Right cardiac atrium (tissue), 5 donors: ENCODE measurements at regions of chr10 and their contacts with region 1.

Region 1: DNA sequence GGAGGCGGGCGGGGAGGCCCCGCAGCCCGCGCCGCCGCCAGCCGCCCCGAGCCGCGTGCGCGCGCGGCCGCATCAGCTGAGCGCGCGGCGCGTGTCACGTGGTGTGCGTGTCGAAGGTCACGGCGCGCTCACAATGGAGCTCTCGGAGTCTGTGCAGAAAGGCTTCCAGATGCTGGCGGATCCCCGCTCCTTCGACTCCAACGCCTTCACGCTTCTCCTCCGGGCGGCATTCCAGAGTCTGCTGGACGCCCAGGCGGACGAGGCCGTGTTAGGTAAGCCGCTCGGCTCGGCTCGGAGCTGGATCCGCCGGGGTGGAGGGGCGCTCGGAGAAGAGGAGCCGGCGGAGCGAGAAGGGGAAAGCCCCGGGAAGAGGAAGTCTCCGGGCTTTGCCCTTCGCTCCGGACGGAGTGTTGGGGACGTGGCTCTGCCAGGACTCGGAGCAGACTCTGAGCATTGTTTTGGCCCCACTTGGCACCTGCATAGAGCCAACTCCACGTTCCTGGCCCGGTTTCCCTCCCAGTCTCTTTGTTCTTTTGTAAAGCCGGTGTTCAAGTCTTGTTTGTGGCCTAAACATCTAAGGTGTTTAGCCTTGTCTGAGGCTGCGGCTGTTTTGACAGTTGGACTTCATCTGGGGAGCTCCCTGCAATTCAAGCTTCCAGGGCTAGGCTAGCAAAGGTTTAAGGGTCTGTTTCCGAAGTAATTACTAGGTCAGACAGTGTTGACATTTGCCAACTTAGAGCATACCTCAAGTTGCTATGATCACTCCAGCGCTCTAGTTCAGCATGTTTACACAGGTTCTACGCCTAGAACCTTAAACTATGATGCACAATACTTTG is at the start of gene COMMD3:
- DNase-seq: peak; percentile 90 to 97 (median 95)
- ATAC-seq: peak; percentile 93
- H3K4me3 ChIP-seq: peak within 1 kb of the TSS; percentile 89
- H3K27ac ChIP-seq: peak within 1 kb of the TSS; percentile 96
- H3K4me1 ChIP-seq: peaks cover 3% of the 10 kb centered on the region
- H3K27me3 ChIP-seq: no peaks in the 10 kb centered on the region
- total RNA-seq, gene COMMD3: 67.7 to 86.3 (median 81.2) TPM

Region 2: GRCh38 chr10:21675157-21675796 is 641.2 kb before region 1 on chr10:
- intact Hi-C with region 1: no loop called
- DNase-seq: peak in 1 of 3 donors; percentile 53
- ATAC-seq: peak in 1 of 2 donors; percentile 45
- H3K4me3 ChIP-seq: no peak overlapping the region
- H3K27ac ChIP-seq: no peak overlapping the region
- H3K4me1 ChIP-seq: peaks cover 1% of the 10 kb centered on the region
- H3K27me3 ChIP-seq: no peaks in the 10 kb centered on the region

Region 3: GRCh38 chr10:22228943-22229801 is 87.3 kb before region 1 on chr10:
- intact Hi-C with region 1: loop called in 3 of 4 experiments (anchors 5 to 10 kb)
- DNase-seq: peak; percentile 86 to 94 (median 93)
- ATAC-seq: peak; percentile 99
- H3K4me3 ChIP-seq: peak overlapping the region; percentile 90
- H3K27ac ChIP-seq: peak overlapping the region; percentile 97
- H3K4me1 ChIP-seq: peaks cover 2% of the 10 kb centered on the region
- H3K27me3 ChIP-seq: no peaks in the 10 kb centered on the region

Region 4: GRCh38 chr10:22251751-22252223 is 64.7 kb before region 1 on chr10:
- intact Hi-C with region 1: loop called in 3 of 4 experiments (anchors 5 to 10 kb)
- DNase-seq: peak; percentile 73 to 85 (median 84)
- ATAC-seq: peak; percentile 48 to 71
- H3K4me3 ChIP-seq: peak overlapping the region; percentile 87
- H3K27ac ChIP-seq: peak overlapping the region; percentile 98
- H3K4me1 ChIP-seq: no peaks in the 10 kb centered on the region
- H3K27me3 ChIP-seq: no peaks in the 10 kb centered on the region

Region 5: GRCh38 chr10:22386503-22386902 is 70.0 kb after region 1 on chr10:
- intact Hi-C with region 1: no loop called
- DNase-seq: no peak
- ATAC-seq: no peak
- H3K4me3 ChIP-seq: no peak overlapping the region
- H3K27ac ChIP-seq: no peak overlapping the region
- H3K4me1 ChIP-seq: no peaks in the 10 kb centered on the region
- H3K27me3 ChIP-seq: peaks cover 2% of the 10 kb centered on the region

Region 6: DNA sequence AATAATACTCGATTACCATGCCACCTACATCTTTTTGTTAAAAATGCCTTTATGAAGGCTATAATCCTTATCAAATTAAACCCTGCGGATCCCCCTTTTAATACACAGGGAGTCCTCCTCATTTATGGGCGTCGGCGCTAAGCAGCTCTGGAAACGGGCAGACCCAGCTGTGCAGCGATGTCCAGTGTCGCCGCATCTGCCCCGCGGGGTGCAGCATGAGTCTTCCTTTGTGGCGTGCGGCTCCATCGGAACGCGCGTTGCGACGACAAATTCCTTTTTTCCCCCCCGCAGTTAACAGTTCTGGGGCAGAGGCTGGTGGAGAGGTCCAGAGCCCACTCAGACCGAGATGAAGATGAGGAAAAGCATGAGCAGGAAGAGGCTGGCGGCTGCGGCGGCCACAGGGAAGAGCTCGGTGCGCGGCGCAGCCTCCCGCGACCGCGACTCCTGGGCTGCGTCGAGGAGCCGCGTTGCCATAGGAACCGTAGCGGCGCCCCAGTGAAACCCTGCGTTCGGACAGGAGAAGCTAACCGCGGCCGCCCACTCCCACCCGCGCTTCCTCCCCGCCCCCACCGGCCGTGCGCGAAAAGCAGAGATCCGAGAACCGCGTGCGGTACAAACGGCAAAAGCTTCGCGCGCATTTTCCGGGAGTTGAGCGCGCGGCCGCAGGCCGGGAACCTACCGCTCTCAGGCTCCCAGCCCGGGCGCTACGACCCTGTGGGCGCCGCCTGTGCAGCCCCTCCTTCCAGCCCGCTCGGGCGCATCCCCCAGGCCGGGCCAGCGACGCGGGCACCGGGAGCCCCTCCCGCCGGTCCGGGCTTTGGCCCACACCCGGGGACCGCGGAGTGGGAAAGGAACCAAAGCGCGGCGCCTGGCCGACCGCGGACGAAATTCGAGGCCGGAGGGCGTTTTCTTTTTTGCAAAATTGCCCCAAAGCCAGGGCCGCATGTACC is 159.4 kb after region 1 on chr10:
- intact Hi-C with region 1: no loop called
- DNase-seq: peak; percentile 14 to 57 (median 55)
- ATAC-seq: peak; percentile 42 to 50
- H3K4me3 ChIP-seq: peak overlapping the region; percentile 47
- H3K27ac ChIP-seq: no peak overlapping the region
- H3K4me1 ChIP-seq: peaks cover 2% of the 10 kb centered on the region
- H3K27me3 ChIP-seq: peaks cover 2% of the 10 kb centered on the region